Activated CD4-positive, alpha-beta T cell treated with anti-CD3 and anti-CD28 coated beads for 36 hours (primary cell): ENCODE measurements at regions of chr5 and their contacts with region 1.

Region 1: DNA sequence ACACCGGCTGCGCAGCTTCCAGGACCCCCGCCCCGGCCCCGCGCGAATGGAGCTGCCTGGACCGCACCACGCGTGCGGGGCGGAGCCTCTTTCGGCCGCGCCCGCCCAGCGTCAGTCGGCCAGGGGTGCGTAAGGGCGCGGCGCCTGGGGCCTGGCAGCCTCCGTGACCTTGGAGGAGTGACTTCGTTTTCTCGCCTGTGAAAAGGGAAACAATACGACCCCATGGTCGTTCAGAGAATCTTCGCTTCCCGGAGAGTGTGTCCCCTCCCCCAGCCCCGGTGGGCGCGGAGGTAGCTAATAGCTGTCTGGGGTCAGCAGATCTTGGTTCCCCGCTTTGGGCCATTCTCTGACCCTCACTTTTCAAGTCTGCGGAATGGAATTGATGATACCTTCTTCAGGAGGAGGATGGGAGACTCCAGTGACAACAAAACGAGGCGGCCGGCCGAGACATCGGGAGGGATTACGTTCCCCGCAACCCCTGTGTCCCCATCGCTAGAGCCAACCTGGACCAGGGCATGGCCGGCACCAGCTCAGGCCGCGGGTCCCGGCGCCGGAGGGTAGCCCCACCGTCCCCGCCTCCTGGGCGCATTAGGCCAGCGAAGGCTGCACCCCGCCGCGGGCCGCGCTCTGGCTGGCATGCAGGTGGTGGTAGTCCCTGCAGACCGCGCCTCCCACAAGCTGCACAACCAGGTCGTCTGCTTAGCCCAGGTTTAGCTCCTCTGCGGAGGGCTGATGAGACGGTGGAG is 5.5 kb upstream of the CDHR2 start:
- DNase-seq: peak; percentile 87
- ATAC-seq: peak; percentile 75
- H3K4me3 Mint-ChIP-seq: peak overlapping the region; percentile 85
- H3K27ac Mint-ChIP-seq: peak overlapping the region; percentile 93
- H3K4me1 Mint-ChIP-seq: peaks cover 61% of the 10 kb centered on the region
- H3K27me3 Mint-ChIP-seq: no peaks in the 10 kb centered on the region

Region 2: DNA sequence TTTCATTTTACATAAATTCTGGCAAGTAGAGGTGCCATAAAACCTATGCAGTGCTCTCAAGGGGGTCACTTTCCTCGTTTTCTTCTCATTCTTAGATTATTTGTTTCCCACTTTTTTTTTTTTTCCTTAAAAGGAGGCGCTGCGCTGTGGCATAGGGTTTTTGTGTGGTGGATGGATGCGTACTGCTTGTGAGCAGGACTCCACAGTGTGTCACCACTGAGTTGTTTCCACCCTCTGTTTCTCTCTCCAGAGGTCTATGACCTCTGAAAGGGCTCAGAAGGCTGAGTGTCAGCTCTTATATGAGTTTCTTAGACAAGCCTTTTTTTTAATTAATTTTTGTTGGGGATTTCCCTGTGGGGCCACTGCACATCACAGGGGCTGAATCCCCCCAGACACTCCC is 113.6 kb before region 1 on chr5:
- CTCF ChIA-PET with region 1: no interaction called
- POLR2A ChIA-PET with region 1: no interaction called
- intact Hi-C with region 1: no loop called
- DNase-seq: no peak
- ATAC-seq: no peak
- H3K4me3 Mint-ChIP-seq: no peak overlapping the region
- H3K27ac Mint-ChIP-seq: no peak overlapping the region
- H3K4me1 Mint-ChIP-seq: no peaks in the 10 kb centered on the region
- H3K27me3 Mint-ChIP-seq: no peaks in the 10 kb centered on the region

Region 3: GRCh38 chr5:176596689-176597416 is 53.3 kb after region 1 on chr5:
- CTCF ChIA-PET with region 1: no interaction called
- POLR2A ChIA-PET with region 1: no interaction called
- intact Hi-C with region 1: loop called in 1 of 2 experiments (anchors 2 kb)
- DNase-seq: peak; percentile 81
- ATAC-seq: peak; percentile 87
- H3K4me3 Mint-ChIP-seq: peak overlapping the region; percentile 48
- H3K27ac Mint-ChIP-seq: peak overlapping the region; percentile 68
- H3K4me1 Mint-ChIP-seq: peaks cover 8% of the 10 kb centered on the region
- H3K27me3 Mint-ChIP-seq: peaks cover 2% of the 10 kb centered on the region